Lower leg skin (tissue), 4 donors: ENCODE measurements at regions of chr3 and their contacts with region 1.

Region 1: DNA sequence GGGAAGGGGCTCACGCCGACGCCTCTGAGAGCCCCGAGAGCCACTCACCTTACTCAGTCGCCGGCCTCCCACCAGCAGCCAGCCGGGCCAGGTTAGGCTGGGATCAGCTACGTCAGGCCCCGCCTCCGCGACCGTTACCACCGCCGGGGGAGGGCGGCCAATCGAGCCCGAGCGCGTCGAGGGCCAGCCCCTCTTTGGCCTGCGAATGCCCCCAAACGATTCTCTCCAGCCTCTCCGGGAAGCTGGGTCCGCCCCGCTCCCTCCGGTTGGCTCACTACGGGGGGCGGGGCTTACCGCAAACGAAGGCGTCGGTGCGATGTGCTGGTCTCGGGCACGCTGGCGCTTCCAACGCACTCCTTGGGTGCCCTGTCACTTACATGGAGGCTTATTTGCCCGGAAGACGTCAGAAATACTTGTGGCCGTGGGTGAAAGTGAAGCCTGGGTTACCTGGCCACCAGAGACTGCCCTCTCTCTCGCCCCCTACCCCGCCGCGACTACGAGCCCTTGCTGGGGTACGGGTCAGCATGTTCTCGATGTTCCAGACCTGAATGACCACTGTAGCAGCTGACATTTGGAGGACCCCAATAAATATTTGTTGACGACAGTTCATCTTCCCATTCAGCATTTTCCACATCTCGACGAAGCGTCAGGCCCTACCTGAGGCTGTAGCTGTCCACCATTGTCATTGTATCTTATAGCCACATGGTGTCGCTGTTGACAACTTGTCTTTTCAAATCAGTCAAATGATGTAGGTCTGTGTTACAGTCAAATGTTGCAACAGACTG is at the start of gene CEP70:
- DNase-seq: peak; percentile 84 to 98
- H3K4me3 ChIP-seq: peak within 1 kb of the TSS; percentile 45
- CTCF ChIP-seq: peak in 1 of 3 donors; percentile 88
- POLR2A ChIP-seq: peak in 1 of 2 donors; percentile 22
- total RNA-seq, gene CEP70: 10.2 to 13.5 (median 12.2) TPM

Region 2: GRCh38 chr3:138186803-138187295 is 407.5 kb before region 1 on chr3:
- intact Hi-C with region 1: loop called (anchors 10 kb)
- DNase-seq: peak; percentile 87 to 98
- H3K4me3 ChIP-seq: peak overlapping the region; percentile 96
- CTCF ChIP-seq: no peak
- POLR2A ChIP-seq: no peak

Region 3: GRCh38 chr3:138417559-138417982 is 176.8 kb before region 1 on chr3:
- intact Hi-C with region 1: loop called (anchors 5 kb)
- DNase-seq: peak; percentile 73 to 94
- H3K4me3 ChIP-seq: no peak overlapping the region
- CTCF ChIP-seq: peak in 1 of 3 donors; percentile 33
- POLR2A ChIP-seq: no peak

Region 4: GRCh38 chr3:138915503-138916498 is 321.5 kb after region 1 on chr3:
- intact Hi-C with region 1: loop called (anchors 1 kb)
- DNase-seq: peak; percentile 91 to 98
- H3K4me3 ChIP-seq: peak overlapping the region; percentile 46
- CTCF ChIP-seq: peak in 1 of 3 donors; percentile 72
- POLR2A ChIP-seq: no peak